CD4-positive, alpha-beta T cell (primary cell): ENCODE measurements at regions of chr10 and their contacts with region 1.

Region 1: DNA sequence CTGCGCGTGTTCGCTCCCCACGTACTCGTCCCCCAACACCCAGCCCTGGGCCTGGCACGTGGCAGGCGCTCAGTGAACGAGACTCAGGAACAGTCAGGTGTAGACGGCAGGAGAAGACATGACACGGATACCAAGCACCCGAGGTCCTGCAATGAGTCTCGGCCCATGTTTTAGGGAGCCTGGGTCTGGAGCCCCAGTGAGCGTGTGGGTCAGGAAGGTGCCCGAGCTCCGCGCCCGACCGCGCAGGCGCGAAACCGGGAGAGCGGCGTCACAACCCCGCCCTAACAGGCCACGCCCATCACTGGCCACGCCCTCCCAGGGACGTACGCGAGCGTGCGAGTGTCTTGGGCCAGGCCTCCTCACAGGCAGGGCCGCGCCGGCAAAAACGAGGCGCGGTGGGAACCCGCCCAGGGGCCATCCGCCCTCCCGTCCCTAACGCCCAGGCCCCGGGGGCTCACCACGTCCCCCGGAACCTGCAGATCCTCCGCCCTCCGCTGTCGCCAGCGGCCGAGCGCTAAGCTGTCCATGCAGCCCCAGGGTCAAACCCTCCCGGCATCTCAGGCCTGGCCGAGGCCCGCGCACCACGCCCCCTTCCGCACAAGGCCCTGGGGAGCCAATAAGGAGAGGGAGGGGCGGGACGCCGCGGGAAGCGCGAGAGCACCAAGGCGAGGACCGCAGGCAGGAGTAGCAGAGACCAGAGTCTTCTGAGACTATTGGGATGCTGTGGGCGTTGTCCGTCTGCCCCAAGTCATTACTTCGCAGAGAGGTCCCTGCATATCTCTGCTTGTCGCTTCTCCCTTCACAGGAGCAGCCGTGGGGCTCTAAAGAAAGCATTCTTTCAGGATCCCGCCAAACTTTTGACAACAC is at the start of gene C10orf143:
- DNase-seq: peak; percentile 96 to 100 (median 98)
- ATAC-seq: peak; percentile 76
- H3K4me3 ChIP-seq: peak within 1 kb of the TSS; percentile 70
- H3K4me3 Mint-ChIP-seq: peak within 1 kb of the TSS; percentile 99
- H3K27ac ChIP-seq: peak within 1 kb of the TSS; percentile 90 to 91
- H3K27ac Mint-ChIP-seq: peak within 1 kb of the TSS; percentile 96
- H3K4me1 ChIP-seq: peaks cover 36% of the 10 kb centered on the region
- H3K4me1 Mint-ChIP-seq: peaks cover 66% of the 10 kb centered on the region
- H3K27me3 ChIP-seq: no peaks in the 10 kb centered on the region
- H3K27me3 Mint-ChIP-seq: no peaks in the 10 kb centered on the region
- CTCF ChIP-seq: no peak
- total RNA-seq, gene C10orf143: 4.3 to 5.8 TPM

Region 2: DNA sequence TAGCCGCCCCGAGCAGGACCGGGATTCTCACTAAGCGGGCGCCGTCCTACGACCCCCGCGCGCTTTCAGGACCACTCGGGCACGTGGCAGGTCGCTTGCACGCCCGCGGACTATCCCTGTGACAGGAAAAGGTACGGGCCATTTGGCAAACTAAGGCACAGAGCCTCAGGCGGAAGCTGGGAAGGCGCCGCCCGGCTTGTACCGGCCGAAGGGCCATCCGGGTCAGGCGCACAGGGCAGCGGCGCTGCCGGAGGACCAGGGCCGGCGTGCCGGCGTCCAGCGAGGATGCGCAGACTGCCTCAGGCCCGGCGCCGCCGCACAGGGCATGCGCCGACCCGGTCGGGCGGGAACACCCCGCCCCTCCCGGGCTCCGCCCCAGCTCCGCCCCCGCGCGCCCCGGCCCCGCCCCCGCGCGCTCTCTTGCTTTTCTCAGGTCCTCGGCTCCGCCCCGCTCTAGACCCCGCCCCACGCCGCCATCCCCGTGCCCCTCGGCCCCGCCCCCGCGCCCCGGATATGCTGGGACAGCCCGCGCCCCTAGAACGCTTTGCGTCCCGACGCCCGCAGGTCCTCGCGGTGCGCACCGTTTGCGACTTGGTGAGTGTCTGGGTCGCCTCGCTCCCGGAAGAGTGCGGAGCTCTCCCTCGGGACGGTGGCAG is 643.6 kb before region 1 on chr10 and contains the start of gene MGMT:
- CTCF ChIA-PET with region 1: no interaction called
- POLR2A ChIA-PET with region 1: interaction called, 26 read pairs
- intact Hi-C with region 1: loop called (anchors 1 kb)
- DNase-seq: peak; percentile 95 to 100 (median 99)
- ATAC-seq: peak; percentile 98
- H3K4me3 ChIP-seq: peak within 1 kb of the TSS; percentile 78
- H3K4me3 Mint-ChIP-seq: peak within 1 kb of the TSS; percentile 93
- H3K27ac ChIP-seq: peak within 1 kb of the TSS; percentile 58
- H3K27ac Mint-ChIP-seq: peak within 1 kb of the TSS; percentile 90
- H3K4me1 ChIP-seq: peaks cover 21% of the 10 kb centered on the region
- H3K4me1 Mint-ChIP-seq: peaks cover 22% of the 10 kb centered on the region
- H3K27me3 ChIP-seq: no peaks in the 10 kb centered on the region
- H3K27me3 Mint-ChIP-seq: no peaks in the 10 kb centered on the region
- CTCF ChIP-seq: no peak
- total RNA-seq, gene MGMT: 9.0 to 9.6 TPM

Region 3: GRCh38 chr10:129963641-129964501 is 146.6 kb before region 1 on chr10 and contains the start of gene EBF3:
- CTCF ChIA-PET with region 1: no interaction called
- POLR2A ChIA-PET with region 1: interaction called, 4 read pairs
- intact Hi-C with region 1: loop called (anchors 10 kb)
- DNase-seq: peak in 9 of 14 experiments; percentile 14 to 77 (median 46)
- ATAC-seq: peak; percentile 73
- H3K4me3 ChIP-seq: peak within 1 kb of the TSS; percentile 30
- H3K4me3 Mint-ChIP-seq: peak within 1 kb of the TSS; percentile 85
- H3K27ac ChIP-seq: no peak within 1 kb of the TSS
- H3K27ac Mint-ChIP-seq: no peak within 1 kb of the TSS
- H3K4me1 ChIP-seq: peaks cover 33% of the 10 kb centered on the region
- H3K4me1 Mint-ChIP-seq: peaks cover 32% of the 10 kb centered on the region
- H3K27me3 ChIP-seq: peaks cover 69 to 87% of the 10 kb centered on the region in 2 experiments
- H3K27me3 Mint-ChIP-seq: peaks cover 72% of the 10 kb centered on the region
- CTCF ChIP-seq: no peak
- total RNA-seq, gene EBF3: not detected

Region 4: DNA sequence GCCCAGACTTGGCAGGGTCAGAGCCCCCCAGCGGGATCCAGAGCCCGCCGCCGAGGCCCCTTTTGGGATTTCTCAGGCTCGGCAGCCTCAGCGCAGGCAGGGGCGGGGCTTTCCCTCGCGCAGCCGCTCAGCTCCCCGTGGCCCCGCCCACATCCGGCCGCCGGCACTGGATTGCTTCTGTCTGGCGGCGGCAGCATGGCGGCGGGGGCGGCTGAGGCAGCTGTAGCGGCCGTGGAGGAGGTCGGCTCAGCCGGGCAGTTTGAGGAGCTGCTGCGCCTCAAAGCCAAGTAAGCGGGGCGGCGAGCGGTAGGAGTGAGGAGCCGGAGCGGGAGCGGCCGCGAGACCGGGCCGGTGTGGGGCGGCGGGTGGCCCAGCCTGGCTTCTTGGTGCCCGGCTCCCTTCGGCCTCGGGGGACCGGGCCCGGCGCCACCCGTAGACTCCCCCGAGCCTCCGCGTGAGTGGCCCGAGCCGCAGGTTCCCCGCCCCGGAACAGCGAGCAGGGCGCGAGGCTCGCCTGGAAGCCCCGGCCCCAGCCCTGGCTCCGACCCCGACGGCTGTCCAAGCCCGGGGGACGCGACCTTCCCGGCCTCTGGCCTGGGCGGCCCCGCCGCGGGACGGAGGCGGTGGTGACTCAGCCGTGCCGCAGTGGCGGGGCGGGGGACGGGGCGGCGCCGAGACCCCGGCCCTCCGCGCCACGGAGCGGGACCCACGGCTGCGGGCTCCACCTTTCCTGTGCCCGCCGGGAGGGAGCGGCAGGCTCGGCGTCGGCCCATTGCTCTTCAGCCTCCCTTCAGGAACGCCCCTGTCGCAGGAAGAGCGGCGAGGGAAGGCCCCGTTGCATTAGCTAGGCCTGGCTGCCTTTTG is 26.0 kb after region 1 on chr10 and contains the start of gene GLRX3:
- CTCF ChIA-PET with region 1: interaction called, 30 read pairs
- POLR2A ChIA-PET with region 1: interaction called, 212 read pairs
- intact Hi-C with region 1: loop called (anchors 1 kb)
- DNase-seq: peak; percentile 77 to 95 (median 86)
- ATAC-seq: peak; percentile 94
- H3K4me3 ChIP-seq: peak within 1 kb of the TSS; percentile 68
- H3K4me3 Mint-ChIP-seq: peak within 1 kb of the TSS; percentile 96
- H3K27ac ChIP-seq: peak within 1 kb of the TSS; percentile 18 to 70
- H3K27ac Mint-ChIP-seq: peak within 1 kb of the TSS; percentile 80
- H3K4me1 ChIP-seq: peaks cover 38% of the 10 kb centered on the region
- H3K4me1 Mint-ChIP-seq: peaks cover 35% of the 10 kb centered on the region
- H3K27me3 ChIP-seq: no peaks in the 10 kb centered on the region
- H3K27me3 Mint-ChIP-seq: peaks cover 7% of the 10 kb centered on the region
- CTCF ChIP-seq: no peak
- total RNA-seq, gene GLRX3: 25.4 to 29.7 TPM

Region 5: GRCh38 chr10:130190055-130190736 is 79.7 kb after region 1 on chr10:
- CTCF ChIA-PET with region 1: interaction called, 4 read pairs
- POLR2A ChIA-PET with region 1: interaction called, 4 read pairs
- intact Hi-C with region 1: loop called in 1 of 2 experiments (anchors 5 kb)
- DNase-seq: peak; percentile 81 to 93 (median 88)
- ATAC-seq: peak; percentile 97
- H3K4me3 ChIP-seq: peak overlapping the region; percentile 29
- H3K4me3 Mint-ChIP-seq: no peak overlapping the region
- H3K27ac ChIP-seq: no peak overlapping the region
- H3K27ac Mint-ChIP-seq: no peak overlapping the region
- H3K4me1 ChIP-seq: peaks cover 12% of the 10 kb centered on the region
- H3K4me1 Mint-ChIP-seq: no peaks in the 10 kb centered on the region
- H3K27me3 ChIP-seq: peaks cover 4% of the 10 kb centered on the region in 2 experiments
- H3K27me3 Mint-ChIP-seq: peaks cover 12% of the 10 kb centered on the region
- CTCF ChIP-seq: peak; percentile 100

Region 6: DNA sequence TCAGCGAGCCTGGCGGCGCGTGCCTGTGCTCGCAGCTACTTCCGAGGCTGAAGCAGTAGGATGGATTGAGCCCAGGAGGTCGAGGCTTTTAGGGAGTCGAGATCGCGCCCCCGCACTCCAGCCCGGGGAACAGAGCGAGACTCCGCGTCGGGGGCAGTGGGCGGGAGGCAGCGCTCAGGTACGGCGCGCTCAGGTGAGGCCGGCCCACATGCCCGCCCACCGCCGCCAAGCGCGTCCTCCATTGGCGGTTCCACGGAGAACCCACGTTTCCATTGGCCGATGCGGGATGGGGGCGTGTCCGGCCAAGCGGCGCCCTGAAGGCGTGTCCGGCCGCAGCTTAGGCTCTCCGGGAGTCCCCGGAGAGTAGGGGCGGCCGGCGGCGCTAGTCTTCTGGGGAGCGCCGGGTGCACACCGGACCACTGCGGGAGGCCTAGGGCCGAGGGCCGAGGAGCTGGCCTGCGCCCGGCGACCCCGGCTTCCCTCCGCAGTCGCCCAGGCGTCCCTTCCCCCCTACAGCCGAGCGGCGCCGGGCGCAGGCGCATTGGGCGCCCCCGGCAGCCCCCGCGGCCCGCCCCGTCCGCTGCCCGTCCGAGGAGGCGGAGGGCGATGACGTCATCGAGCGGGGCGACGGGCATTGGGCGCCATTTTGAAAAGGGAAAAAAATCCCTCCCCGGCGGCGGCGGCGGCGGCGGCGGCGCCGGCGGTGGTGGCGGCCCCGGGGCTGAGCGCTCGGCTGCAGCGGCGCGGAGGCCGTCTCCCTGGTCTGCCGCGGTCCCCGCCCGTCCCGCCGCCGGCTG is 1790.1 kb after region 1 on chr10 and contains the start of gene PPP2R2D:
- CTCF ChIA-PET with region 1: no interaction called
- POLR2A ChIA-PET with region 1: no interaction called
- intact Hi-C with region 1: loop called in 1 of 2 experiments (anchors 10 kb)
- DNase-seq: peak; percentile 89 to 98 (median 95)
- ATAC-seq: peak; percentile 81
- H3K4me3 ChIP-seq: peak within 1 kb of the TSS; percentile 73
- H3K4me3 Mint-ChIP-seq: peak within 1 kb of the TSS; percentile 97
- H3K27ac ChIP-seq: peak within 1 kb of the TSS; percentile 66 to 82
- H3K27ac Mint-ChIP-seq: peak within 1 kb of the TSS; percentile 96
- H3K4me1 ChIP-seq: peaks cover 65% of the 10 kb centered on the region
- H3K4me1 Mint-ChIP-seq: peaks cover 61% of the 10 kb centered on the region
- H3K27me3 ChIP-seq: no peaks in the 10 kb centered on the region
- H3K27me3 Mint-ChIP-seq: no peaks in the 10 kb centered on the region
- CTCF ChIP-seq: no peak
- total RNA-seq, gene PPP2R2D: 32.6 to 32.9 TPM